Activated CD8-positive, alpha-beta memory T cell treated with anti-CD3 and anti-CD28 coated beads, Interleukin-2, amount 10 ng/mL, durations not matched to agents 7 days and 5 days (primary cell): ENCODE measurements at regions of chr14 and their contacts with region 1.

Region 1: DNA sequence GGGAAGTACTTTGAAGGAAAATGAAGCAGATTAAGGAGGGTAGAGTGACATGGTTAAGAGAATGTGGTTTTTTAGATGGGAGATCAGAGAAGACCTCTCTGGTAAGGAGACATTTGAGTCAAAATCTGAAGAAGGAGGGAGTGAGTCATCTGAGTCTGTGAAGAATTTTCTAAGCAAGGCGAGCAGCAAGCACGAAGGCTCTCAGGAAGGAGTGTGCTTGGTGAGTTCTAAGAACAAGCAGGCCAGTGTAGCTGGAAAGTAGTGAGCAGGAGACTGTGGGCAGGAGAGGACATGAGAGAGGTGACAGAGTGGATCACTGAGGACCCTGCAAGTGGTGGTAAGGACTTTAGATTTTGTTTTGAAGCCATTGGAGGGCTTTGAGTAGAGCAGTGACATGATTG is 76.3 kb upstream of the FUT8 start:
- DNase-seq: peak; percentile 85
- ATAC-seq: peak; percentile 92
- H3K4me3 Mint-ChIP-seq: peak overlapping the region; percentile 81
- H3K27ac Mint-ChIP-seq: peak overlapping the region; percentile 91
- H3K4me1 Mint-ChIP-seq: peaks cover 62% of the 10 kb centered on the region
- H3K27me3 Mint-ChIP-seq: no peaks in the 10 kb centered on the region

Region 2: DNA sequence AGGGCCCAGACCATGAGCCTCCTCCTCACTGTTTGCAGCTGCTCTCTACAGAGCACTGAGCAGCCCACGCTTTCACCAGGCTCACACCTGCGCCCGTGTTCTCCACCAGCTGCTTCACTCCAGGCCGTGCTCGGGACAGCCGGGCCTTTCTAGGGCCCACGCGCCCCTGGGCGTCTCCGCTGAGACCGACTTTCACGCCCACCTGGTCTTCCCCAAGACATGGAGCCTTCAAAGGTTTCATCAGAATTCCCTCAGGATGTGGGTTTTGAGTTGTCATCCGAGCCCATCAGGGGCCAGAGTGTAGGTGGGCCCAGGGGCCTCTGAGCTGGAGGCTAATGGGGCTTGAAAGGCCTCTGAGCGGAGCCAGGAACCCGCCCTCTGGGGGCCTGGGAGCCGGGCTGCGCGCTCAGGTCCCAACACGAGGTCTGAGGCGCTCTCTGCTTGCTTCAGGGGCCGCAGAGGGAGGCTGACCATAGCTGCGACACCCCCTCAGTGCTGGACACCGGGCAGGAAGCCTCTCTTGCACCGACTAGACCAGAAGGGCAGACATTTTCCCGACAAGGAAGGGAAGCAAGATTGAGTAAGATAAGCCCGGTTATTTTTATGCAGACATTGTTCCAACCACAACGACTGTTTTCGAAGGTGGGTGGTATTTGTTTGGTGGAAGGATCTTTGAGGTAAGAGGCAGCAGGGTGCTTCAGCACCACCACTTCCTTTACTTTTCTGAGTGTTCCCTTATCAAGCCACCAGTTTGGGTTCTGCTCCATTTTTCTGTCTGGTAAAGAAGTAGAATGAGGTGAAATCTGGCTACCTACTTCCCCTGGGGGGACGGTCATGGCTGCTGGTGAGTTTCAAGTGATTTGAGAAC is 48.7 kb before region 1 on chr14:
- CTCF ChIA-PET with region 1: interaction called, 11 read pairs
- DNase-seq: peak; percentile 82
- ATAC-seq: peak; percentile 75
- H3K4me3 Mint-ChIP-seq: peak overlapping the region; percentile 71
- H3K27ac Mint-ChIP-seq: peak overlapping the region; percentile 93
- H3K4me1 Mint-ChIP-seq: peaks cover 68% of the 10 kb centered on the region
- H3K27me3 Mint-ChIP-seq: no peaks in the 10 kb centered on the region

Region 3: DNA sequence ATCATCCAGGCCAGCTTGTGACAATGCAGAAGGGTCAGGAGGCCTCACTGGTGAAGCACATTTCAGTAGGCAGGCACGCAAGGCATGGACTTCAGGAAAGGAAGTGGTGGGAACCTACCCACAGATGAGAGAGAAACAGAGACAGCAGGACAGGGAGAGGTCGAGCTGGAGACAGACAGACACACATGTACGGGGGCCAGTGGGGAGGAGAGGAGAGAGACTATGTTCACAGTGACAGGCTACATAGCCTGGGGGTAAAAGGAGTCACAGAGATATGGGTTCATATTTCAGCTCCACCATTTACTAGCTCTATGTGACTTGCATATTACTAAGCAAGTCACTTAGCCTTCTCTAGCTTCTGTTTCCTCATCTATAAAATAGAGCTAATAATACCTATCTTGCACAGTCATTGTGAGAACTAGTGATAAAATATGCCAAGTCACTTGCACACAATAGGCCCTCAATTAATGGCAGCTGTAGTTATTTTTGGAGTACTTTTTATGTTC is 14.8 kb before region 1 on chr14:
- CTCF ChIA-PET with region 1: interaction called, 21 read pairs
- DNase-seq: peak; percentile 75
- ATAC-seq: peak; percentile 85
- H3K4me3 Mint-ChIP-seq: peak overlapping the region; percentile 18
- H3K27ac Mint-ChIP-seq: peak overlapping the region; percentile 88
- H3K4me1 Mint-ChIP-seq: peaks cover 62% of the 10 kb centered on the region
- H3K27me3 Mint-ChIP-seq: no peaks in the 10 kb centered on the region